ENCODE measurements at regions of chr20 and their contacts with region 1.

Region 1: GRCh38 chr20:34876162-34877001 is at the start of gene ACSS2:
- DNase-seq: peak; percentile 91
- H3K4me3 ChIP-seq: peak within 1 kb of the TSS; percentile 71
- CTCF ChIP-seq: no peak

Region 2: DNA sequence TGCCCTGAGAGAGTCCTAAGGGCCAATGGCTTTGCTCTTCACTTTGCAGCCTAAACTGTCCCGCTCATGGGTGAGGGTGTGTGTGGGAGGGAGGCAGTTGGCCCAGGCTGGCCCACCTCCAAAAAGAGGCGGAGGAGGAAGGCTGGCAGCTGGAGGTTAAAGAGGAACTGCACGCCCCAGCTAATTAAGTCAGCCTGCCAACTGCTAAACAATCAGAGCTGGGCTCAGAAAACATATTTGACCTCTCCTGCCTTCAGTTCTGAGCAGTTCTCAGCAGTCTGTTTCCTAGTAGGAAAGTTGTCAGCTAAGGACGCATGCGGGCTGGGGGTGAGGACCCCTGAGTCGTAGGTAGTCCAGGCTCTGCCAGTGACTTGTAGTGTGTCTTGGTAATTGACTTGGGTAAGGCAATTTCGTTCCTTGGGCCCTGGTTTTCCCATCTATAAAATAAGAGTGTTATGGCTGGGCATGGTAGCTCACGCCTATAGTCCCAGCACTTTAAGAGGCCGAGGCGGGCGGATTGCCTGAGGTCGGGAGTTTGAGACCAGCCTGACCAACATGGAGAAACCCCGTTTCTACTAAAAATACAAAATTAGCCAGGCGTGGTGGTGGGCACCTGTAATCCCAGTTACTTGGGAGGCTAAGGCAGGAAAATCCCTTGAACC is 62.3 kb after region 1 on chr20:
- CTCF ChIA-PET with region 1: interaction called, 67 read pairs
- POLR2A ChIA-PET with region 1: interaction called, 3 read pairs
- DNase-seq: no peak
- H3K4me3 ChIP-seq: no peak overlapping the region
- CTCF ChIP-seq: no peak

Region 3: GRCh38 chr20:34964486-34964885 is 88.1 kb after region 1 on chr20:
- CTCF ChIA-PET with region 1: interaction called, 245 read pairs
- POLR2A ChIA-PET with region 1: no interaction called
- DNase-seq: no peak
- H3K4me3 ChIP-seq: no peak overlapping the region
- CTCF ChIP-seq: no peak

Region 4: GRCh38 chr20:34983995-34984735 is 107.8 kb after region 1 on chr20:
- CTCF ChIA-PET with region 1: interaction called, 64 read pairs
- POLR2A ChIA-PET with region 1: no interaction called
- DNase-seq: no peak
- H3K4me3 ChIP-seq: no peak overlapping the region
- CTCF ChIP-seq: no peak

Region 5: DNA sequence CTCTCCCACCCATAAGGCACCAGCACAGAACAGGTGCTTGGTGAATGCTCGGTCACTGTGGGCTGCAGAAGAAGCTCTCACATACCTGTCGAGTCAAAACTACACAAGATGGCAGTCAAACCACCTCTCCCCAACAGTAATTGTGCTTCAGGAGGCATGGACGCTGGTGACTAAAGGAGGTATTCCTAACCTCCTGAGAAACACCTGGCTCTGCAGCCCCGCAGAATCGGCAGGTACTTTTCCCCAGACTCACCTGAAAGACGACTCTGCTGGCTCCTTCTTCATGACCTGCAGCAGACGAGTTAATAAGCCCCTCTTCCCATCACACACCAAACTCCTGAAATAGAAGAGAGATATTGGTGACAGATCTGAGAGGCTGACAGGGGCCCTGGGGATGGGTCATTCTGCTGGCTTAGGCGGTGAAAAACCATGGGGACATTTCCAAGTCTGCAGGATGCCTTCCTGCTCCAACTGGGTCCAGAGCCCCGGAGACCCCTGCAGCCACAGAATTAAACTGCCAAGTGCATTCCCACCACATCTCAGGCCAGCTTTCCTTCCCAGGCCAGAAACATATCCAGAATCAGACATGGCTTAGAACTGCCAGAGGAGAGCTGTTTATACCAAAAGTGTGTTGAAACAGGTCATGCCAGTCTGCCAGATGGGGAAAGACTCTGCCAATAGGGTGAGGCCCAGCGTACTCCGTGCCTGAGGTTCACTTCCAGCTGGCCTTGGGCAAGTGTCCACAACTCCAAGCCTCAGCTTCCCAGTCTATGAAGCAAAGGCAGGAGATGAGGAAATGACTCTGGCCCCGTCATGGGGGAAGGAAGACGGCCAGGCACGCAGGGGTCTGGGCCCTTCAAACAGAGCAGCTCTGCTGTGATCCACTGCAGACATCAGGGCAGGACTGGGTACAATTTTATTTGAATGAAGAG is 132.3 kb after region 1 on chr20:
- CTCF ChIA-PET with region 1: interaction called, 111 read pairs
- POLR2A ChIA-PET with region 1: no interaction called
- DNase-seq: no peak
- H3K4me3 ChIP-seq: no peak overlapping the region
- CTCF ChIP-seq: no peak

Region 6: GRCh38 chr20:35039146-35039545 is 162.8 kb after region 1 on chr20:
- CTCF ChIA-PET with region 1: interaction called, 12 read pairs
- POLR2A ChIA-PET with region 1: no interaction called
- DNase-seq: no peak
- H3K4me3 ChIP-seq: no peak overlapping the region
- CTCF ChIP-seq: no peak

Region 7: GRCh38 chr20:35092524-35093266 is 216.3 kb after region 1 on chr20 and contains the start of gene TRPC4AP:
- CTCF ChIA-PET with region 1: interaction called, 23 read pairs
- POLR2A ChIA-PET with region 1: interaction called, 3 read pairs
- DNase-seq: no peak
- H3K4me3 ChIP-seq: peak within 1 kb of the TSS; percentile 83
- CTCF ChIP-seq: peak; percentile 93

Region 8: DNA sequence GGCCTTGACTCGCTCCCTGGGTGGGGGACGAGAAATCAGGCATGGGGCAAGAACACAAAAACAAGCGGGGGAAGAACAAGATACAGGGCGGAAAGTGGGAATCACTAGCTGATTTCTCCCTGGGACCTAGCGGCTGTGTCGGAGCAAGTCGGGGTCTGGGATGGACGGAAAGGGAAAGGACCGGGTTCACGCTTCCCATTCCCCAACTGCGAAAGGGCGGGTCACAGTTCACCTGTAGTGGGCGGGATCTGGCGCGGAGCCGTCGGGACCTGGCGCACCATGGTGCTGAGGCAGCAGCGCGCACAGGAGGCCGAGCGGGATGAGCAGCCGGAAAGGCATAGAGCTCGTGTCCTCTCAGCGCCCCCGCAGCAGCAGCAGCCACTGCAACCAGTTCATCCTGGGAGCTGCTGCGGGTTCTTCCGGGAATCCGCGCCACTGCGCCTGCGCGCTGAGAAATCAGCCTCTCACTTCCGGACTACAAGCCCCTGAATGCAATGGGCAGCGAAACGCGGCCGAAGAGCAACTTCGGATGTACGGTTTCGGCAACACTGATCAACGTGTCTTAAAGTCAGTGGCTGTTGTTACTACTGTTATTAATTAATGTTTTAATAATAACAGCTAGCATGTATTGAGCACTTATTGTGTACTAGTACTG is 270.7 kb after region 1 on chr20 and contains the start of gene EDEM2:
- CTCF ChIA-PET with region 1: no interaction called
- POLR2A ChIA-PET with region 1: no interaction called
- DNase-seq: peak; percentile 75
- H3K4me3 ChIP-seq: peak within 1 kb of the TSS; percentile 95
- CTCF ChIP-seq: peak; percentile 8

Measured in AG04449 (cell line).